Naive thymus-derived CD4-positive, alpha-beta T cell (primary cell): ENCODE measurements at regions of chr9 and their contacts with region 1.

Region 1: DNA sequence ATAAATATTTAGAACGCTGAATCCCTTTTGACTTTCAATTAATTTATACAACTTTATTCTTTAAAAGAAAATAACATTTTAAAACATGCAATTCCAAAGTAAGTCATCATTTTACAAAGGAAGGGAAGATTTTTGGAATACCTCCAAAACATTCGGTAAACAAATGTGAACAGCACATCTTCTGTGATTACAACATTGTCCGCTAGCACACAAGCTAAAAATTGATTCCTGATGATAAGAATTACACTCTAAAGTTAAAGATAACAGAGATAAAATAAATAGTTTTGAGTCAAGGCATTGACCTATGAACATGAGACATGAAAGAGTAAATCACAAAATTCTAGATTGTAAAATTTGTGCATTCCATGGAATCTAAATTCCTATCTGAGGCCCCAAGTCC is 56.2 kb upstream of the TRAF1 start:
- DNase-seq: no peak
- ATAC-seq: no peak
- H3K4me3 ChIP-seq: no peak overlapping the region
- H3K4me3 Mint-ChIP-seq: no peak overlapping the region
- H3K27ac ChIP-seq: no peak overlapping the region
- H3K27ac Mint-ChIP-seq: no peak overlapping the region
- H3K4me1 ChIP-seq: no peaks in the 10 kb centered on the region
- H3K4me1 Mint-ChIP-seq: peaks cover 0 to 10% (median 4%) of the 10 kb centered on the region in 7 donors
- H3K27me3 ChIP-seq: no peaks in the 10 kb centered on the region
- H3K27me3 Mint-ChIP-seq: peaks cover 0 to 30% (median 0%) of the 10 kb centered on the region in 5 donors

Region 2: DNA sequence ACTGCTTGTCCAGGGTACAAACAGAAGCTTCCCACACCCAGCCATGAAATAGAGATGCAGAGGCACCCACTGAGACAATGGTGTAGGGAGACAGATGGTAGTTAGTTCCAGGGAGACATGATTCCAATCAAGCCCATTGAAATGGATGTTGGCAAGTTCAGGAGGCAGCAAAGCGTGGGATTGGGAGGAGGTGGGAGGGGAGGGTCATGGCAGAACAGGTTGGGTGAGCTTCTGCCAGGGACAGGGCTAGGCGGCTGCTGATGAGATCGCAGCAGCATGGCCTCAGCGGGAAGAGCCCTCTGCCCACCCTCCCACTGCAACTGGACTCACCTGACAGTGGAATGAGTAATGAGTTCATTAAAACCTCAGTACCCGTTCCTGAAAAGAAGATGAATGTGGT is 821.1 kb before region 1 on chr9:
- CTCF ChIA-PET with region 1: no interaction called
- POLR2A ChIA-PET with region 1: no interaction called
- intact Hi-C with region 1: no loop called
- DNase-seq: no peak
- ATAC-seq: no peak
- H3K4me3 ChIP-seq: no peak overlapping the region
- H3K4me3 Mint-ChIP-seq: no peak overlapping the region
- H3K27ac ChIP-seq: no peak overlapping the region
- H3K27ac Mint-ChIP-seq: no peak overlapping the region
- H3K4me1 ChIP-seq: no peaks in the 10 kb centered on the region
- H3K4me1 Mint-ChIP-seq: no peaks in the 10 kb centered on the region
- H3K27me3 ChIP-seq: no peaks in the 10 kb centered on the region
- H3K27me3 Mint-ChIP-seq: peaks cover 0 to 5% (median 0%) of the 10 kb centered on the region in 5 donors

Region 3: GRCh38 chr9:120742951-120743416 is 239.9 kb before region 1 on chr9:
- CTCF ChIA-PET with region 1: no interaction called
- POLR2A ChIA-PET with region 1: no interaction called
- intact Hi-C with region 1: loop called in 1 of 2 experiments (anchors 5 kb)
- DNase-seq: peak in 5 of 9 donors; percentile 5 to 30 (median 13)
- ATAC-seq: peak; percentile 78
- H3K4me3 ChIP-seq: no peak overlapping the region
- H3K4me3 Mint-ChIP-seq: no peak overlapping the region
- H3K27ac ChIP-seq: no peak overlapping the region
- H3K27ac Mint-ChIP-seq: no peak overlapping the region
- H3K4me1 ChIP-seq: no peaks in the 10 kb centered on the region
- H3K4me1 Mint-ChIP-seq: peaks cover 0 to 4% (median 0%) of the 10 kb centered on the region in 7 donors
- H3K27me3 ChIP-seq: no peaks in the 10 kb centered on the region
- H3K27me3 Mint-ChIP-seq: no peaks in the 10 kb centered on the region